HepG2 (cell line): ENCODE measurements at regions of chr1 and their contacts with region 1.

Region 1: GRCh38 chr1:150629115-150629928 is at the start of gene ENSA:
- DNase-seq: peak; percentile 99
- ATAC-seq: peak; percentile 96
- H3K4me3 ChIP-seq: peak within 1 kb of the TSS; percentile 72 to 79 (median 76)
- H3K27ac ChIP-seq: peak within 1 kb of the TSS; percentile 90
- H3K4me1 ChIP-seq: peaks cover 25% of the 10 kb centered on the region
- H3K27me3 ChIP-seq: no peaks in the 10 kb centered on the region; a peak in 1 of 5 replicates
- CTCF ChIP-seq: no peak
- EP300 ChIP-seq: 0 out of 4 replicates have a peak, but pooled peaks of 1 of the 2 experiments have one; percentile 28
- POLR2A ChIP-seq: peak; percentile 70 to 72
- RAD21 ChIP-seq: no peak
- total RNA-seq, gene ENSA: 111 and 137 TPM in 2 replicates

Region 2: GRCh38 chr1:150567717-150568593 is 61.4 kb before region 1 on chr1:
- CTCF ChIA-PET with region 1: no interaction called
- POLR2A ChIA-PET with region 1: interaction called, 62 read pairs
- in situ Hi-C with region 1: loop called (anchors 5 kb)
- intact Hi-C with region 1: no loop called
- DNase-seq: peak; percentile 95
- ATAC-seq: peak; percentile 76
- H3K4me3 ChIP-seq: peak overlapping the region in 2 of 3 experiments; percentile 5 to 38; a peak in 3 of 6 replicates
- H3K27ac ChIP-seq: peak overlapping the region; percentile 65
- H3K4me1 ChIP-seq: peaks cover 78% of the 10 kb centered on the region
- H3K27me3 ChIP-seq: no peaks in the 10 kb centered on the region
- CTCF ChIP-seq: peak; percentile 40
- EP300 ChIP-seq: peak in 1 of 2 experiments; percentile 81; a peak in 2 of 4 replicates
- POLR2A ChIP-seq: no peak; a peak in 1 of 4 replicates
- RAD21 ChIP-seq: no peak

Region 3: DNA sequence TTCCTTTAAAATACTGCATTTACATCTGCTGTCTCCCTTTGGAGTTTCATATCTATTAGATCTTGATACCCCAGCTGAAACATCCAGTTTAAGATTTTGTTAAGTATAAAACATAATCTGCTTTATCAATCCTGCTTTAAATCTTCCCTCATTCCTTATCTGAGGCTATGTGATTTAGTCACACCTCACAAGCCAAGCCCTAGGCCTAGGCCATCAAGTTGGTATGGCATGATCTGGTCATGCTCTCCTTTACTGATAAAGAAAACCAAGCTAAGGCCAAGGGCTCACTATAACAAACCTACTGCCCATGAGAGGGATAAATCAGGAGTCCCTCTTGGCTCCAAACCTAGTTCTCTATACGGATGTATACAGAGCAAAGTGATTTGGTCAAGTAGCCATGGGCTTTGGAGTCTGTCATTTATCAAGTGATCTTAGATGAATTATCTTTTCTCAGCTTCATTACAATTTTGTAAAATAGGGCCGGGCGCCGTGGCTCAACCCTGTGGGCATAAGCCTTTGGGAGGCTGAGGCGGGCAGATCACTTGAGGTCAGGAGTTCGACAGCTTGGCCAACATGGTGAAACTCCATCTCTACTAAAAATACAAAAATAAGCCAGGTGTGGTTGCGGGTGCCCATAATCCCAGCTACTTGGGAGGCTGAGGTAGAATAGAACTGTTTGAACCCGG is 22.7 kb before region 1 on chr1:
- CTCF ChIA-PET with region 1: no interaction called
- POLR2A ChIA-PET with region 1: interaction called, 31 read pairs
- in situ Hi-C with region 1: no loop called
- intact Hi-C with region 1: no loop called
- DNase-seq: no peak
- ATAC-seq: no peak
- H3K4me3 ChIP-seq: no peak overlapping the region
- H3K27ac ChIP-seq: peak overlapping the region; percentile 17
- H3K4me1 ChIP-seq: peaks cover 66% of the 10 kb centered on the region
- H3K27me3 ChIP-seq: no peaks in the 10 kb centered on the region
- CTCF ChIP-seq: no peak
- EP300 ChIP-seq: no peak
- POLR2A ChIP-seq: no peak
- RAD21 ChIP-seq: no peak

Region 4: GRCh38 chr1:150613061-150613920 is 16.0 kb before region 1 on chr1:
- CTCF ChIA-PET with region 1: no interaction called
- POLR2A ChIA-PET with region 1: interaction called, 32 read pairs
- in situ Hi-C with region 1: no loop called
- intact Hi-C with region 1: no loop called
- DNase-seq: peak; percentile 79
- ATAC-seq: peak; percentile 16
- H3K4me3 ChIP-seq: peak overlapping the region in 1 of 3 experiments; percentile 24; a peak in 1 of 6 replicates
- H3K27ac ChIP-seq: peak overlapping the region; percentile 95
- H3K4me1 ChIP-seq: peaks cover 58% of the 10 kb centered on the region
- H3K27me3 ChIP-seq: no peaks in the 10 kb centered on the region
- CTCF ChIP-seq: no peak
- EP300 ChIP-seq: peak in 1 of 2 experiments; percentile 64; a peak in 2 of 4 replicates
- POLR2A ChIP-seq: no peak
- RAD21 ChIP-seq: no peak

Region 5: GRCh38 chr1:150662811-150663210 is 33.5 kb after region 1 on chr1:
- CTCF ChIA-PET with region 1: no interaction called
- POLR2A ChIA-PET with region 1: interaction called, 11 read pairs
- in situ Hi-C with region 1: no loop called
- intact Hi-C with region 1: no loop called
- DNase-seq: no peak
- ATAC-seq: no peak
- H3K4me3 ChIP-seq: no peak overlapping the region
- H3K27ac ChIP-seq: no peak overlapping the region
- H3K4me1 ChIP-seq: peaks cover 10% of the 10 kb centered on the region
- H3K27me3 ChIP-seq: no peaks in the 10 kb centered on the region
- CTCF ChIP-seq: no peak
- EP300 ChIP-seq: no peak
- POLR2A ChIP-seq: no peak
- RAD21 ChIP-seq: no peak

Region 6: GRCh38 chr1:150696590-150697524 is 67.5 kb after region 1 on chr1 and contains the start of gene GOLPH3L:
- CTCF ChIA-PET with region 1: no interaction called
- POLR2A ChIA-PET with region 1: interaction called, 17 read pairs
- in situ Hi-C with region 1: no loop called
- intact Hi-C with region 1: loop called (anchors 10 kb)
- DNase-seq: peak; percentile 99
- ATAC-seq: peak; percentile 100
- H3K4me3 ChIP-seq: peak within 1 kb of the TSS; percentile 73 to 99 (median 83)
- H3K27ac ChIP-seq: peak within 1 kb of the TSS; percentile 73
- H3K4me1 ChIP-seq: 0 out of 2 replicates have a peak, but pooled peaks cover 17% of the 10 kb centered on the region
- H3K27me3 ChIP-seq: no peaks in the 10 kb centered on the region; a peak in 2 of 5 replicates
- CTCF ChIP-seq: no peak
- EP300 ChIP-seq: no peak
- POLR2A ChIP-seq: peak; percentile 72 to 73
- RAD21 ChIP-seq: no peak
- total RNA-seq, gene GOLPH3L: 12.8 and 19.3 TPM in 2 replicates

Region 7: DNA sequence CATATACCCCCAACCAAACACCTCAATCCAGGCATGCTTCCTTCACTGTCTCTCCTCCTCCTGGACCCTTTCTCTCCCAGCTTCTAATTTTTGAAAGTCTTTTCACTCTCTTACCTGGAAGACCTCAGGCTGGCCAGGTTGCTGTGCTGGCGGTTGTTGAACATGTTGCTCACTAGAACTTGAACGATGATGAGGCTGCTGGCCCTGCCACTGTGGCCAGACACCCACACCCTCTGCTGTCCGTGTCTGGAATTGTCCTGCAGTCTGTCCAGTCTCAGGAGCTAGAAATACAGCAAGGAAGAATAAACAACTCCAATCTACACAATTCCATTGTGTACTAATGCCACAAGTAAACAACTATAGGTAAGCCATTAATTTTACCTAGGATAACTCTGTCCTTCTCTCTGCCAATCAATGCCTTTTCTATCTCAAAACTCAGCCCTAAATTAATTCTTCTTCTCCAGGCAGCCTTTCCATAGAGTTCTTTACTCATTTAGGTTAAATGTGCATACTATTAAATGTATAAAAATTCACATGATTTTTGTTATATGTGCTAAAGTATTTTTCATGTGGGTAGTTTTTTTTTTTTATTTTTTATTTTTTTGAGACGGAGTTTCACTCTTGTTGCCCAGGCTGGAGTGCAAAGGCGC is 183.9 kb after region 1 on chr1:
- CTCF ChIA-PET with region 1: no interaction called
- POLR2A ChIA-PET with region 1: interaction called, 3 read pairs
- in situ Hi-C with region 1: no loop called
- intact Hi-C with region 1: loop called (anchors 10 kb)
- DNase-seq: peak; percentile 36
- ATAC-seq: peak; percentile 93
- H3K4me3 ChIP-seq: no peak overlapping the region
- H3K27ac ChIP-seq: no peak overlapping the region
- H3K4me1 ChIP-seq: no peaks in the 10 kb centered on the region
- H3K27me3 ChIP-seq: no peaks in the 10 kb centered on the region
- CTCF ChIP-seq: peak; percentile 84
- EP300 ChIP-seq: no peak
- POLR2A ChIP-seq: no peak
- RAD21 ChIP-seq: peak; percentile 79